ENCODE measurements at regions of chr14 and their contacts with region 1.

Region 1: DNA sequence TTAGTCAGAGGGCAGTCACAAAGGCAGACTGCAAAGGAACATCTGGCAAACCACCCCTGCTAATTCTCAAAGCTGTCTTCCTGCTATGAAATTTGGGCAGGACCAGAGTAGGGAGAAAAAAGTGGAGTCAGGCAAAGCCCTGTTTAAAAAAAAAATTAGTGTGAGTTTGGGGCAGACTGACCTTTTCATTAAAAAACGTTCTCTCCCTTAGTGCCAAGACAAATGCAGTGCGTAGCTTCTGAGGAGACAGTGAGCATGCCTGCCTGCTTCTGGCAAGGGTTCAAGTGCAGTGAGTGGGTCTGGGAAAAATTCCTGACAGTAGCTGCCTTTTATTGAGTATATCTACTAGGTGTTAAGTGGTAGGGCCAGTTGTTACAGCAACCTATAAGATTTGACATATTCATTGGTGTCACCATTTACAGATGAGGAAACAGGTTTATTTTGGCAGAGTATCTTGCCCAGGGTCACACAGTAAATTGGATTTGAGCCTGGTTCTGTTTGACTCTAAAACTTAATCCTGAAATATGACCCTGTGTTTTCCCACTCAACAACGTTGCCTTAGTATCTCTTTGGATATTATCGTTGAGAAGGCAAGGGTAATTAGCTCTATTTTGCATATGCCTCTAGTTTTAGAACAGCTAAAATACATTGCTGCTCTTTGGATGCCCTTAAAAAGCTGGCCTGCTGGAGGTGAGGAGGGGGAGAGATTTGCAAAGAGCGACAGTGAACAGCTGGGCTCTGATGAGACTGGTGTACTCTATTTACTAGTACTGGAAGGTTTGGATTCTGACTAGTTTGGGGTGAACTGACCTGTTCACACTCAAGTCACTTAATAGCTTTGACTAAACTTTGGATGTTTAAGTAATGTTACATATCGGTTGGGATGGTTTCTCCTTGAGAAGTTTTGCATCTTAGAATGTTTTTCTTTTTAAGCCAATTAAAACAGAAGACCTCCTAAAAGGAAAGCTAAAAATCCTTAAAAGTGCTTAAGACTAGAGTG is 72.8 kb downstream of the PAPOLA start:
- DNase-seq: no peak
- ATAC-seq: peak; percentile 24

Region 2: DNA sequence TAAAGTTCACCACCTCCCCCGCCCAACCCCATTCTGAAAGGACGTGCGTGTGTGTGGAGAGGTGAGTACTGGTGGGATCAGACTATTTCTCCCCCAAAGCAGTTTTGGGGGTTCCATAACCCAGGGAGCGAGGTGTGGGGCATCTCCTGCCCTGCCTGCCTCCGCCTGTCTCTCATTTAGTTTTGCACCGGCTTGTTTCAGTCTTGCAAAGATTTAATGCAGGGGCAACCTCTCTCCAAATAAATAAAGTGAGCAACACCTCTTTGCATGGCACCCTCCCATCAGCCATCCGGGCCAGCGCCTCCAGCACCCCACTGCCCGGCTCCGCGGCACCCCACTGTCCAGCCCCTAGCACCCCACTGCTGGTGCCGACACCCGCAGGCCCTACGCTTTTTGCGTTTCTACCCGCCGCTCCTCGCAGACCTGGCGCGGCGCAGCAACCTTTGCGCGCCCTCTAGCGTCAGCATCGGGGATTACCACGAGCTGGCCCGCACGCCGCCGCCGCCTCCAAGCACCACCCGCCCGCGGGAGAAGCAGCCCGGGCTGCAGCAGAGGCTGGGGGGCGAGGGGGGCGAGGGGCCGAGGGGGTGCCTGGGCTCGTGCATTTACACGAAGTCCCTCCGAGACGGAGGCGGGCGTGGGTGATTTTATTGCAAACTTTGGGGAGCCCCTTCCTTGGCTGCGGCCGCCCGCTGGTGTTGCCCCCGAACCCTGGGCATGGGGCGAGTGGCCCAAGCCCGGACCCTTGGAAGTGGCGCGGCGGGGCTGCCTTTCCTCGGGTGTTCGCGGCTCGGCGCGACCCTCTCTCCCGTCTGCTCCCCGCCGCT is 166.4 kb after region 1 on chr14:
- intact Hi-C with region 1: loop called (anchors 5 kb)
- DNase-seq: peak; percentile 87
- ATAC-seq: peak; percentile 48

Region 3: DNA sequence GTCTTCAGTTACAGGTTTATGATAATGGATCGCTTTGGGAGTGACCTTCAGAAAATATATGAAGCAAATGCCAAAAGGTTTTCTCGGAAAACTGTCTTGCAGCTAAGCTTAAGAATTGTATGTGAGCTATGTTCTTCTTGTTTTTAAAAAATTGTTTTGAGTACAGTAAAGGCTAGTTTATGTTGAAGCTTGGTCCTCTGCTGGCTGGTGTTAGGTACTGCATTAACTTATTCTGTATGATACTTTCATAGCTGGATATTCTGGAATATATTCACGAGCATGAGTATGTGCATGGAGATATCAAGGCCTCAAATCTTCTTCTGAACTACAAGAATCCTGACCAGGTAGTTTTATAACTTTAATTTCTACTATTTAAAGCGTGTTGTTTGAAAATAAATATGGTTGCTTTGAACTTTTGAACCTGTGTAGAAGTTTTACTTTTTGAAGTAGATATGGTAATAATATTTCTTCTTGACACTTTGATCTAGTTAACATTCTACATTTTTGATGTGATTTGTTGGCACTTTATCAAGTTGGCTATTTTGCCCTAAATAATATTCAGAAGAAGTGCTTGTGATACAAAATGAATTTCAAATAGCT is 278.0 kb after region 1 on chr14:
- intact Hi-C with region 1: loop called (anchors 10 kb)
- DNase-seq: no peak
- ATAC-seq: no peak